Posterior vena cava (tissue), 2 donors: ENCODE measurements at regions of chr1 and their contacts with region 1.

Region 1: DNA sequence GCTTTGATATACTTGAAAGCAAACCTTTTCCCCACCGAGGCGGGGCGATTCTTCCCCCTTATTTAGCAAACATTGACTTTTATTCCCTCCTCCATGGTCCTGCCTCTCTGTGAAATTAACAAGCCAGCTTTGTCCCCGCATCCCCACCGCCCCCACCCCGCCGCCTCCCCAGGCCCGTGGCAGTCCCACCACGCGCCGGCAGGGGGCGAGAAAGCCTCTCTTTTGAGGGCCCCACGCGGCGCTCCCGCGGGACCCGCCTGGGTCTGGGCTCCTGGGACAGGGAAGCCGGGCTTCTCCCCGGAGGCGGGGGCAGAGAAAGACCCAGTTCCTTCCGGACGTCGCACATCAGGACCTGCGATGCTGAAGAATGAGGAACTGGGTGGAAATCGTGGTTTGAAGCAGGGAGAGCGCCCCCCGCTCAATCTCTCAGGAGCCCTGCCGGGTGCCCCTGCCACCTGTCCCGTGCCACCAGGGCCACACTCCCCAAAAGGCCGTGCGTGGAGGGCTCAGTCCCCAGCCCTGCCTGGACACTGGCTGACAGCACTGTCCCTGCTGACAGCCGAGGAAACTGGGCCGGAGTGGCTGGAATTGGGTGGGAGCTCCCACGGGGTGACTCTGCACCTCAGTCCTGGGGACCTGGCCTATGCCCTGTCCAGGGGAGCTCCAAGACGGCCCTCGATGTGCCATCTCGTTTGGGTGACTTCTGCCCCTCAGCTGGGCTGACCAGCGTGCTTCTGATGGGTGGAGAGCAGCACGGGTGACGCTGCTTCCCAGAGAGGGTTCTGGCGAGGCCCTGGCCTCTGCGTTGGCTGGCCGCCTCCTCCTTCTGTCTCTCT is 8.6 kb upstream of the ACTRT2 start:
- DNase-seq: peak; percentile 85

Region 2: DNA sequence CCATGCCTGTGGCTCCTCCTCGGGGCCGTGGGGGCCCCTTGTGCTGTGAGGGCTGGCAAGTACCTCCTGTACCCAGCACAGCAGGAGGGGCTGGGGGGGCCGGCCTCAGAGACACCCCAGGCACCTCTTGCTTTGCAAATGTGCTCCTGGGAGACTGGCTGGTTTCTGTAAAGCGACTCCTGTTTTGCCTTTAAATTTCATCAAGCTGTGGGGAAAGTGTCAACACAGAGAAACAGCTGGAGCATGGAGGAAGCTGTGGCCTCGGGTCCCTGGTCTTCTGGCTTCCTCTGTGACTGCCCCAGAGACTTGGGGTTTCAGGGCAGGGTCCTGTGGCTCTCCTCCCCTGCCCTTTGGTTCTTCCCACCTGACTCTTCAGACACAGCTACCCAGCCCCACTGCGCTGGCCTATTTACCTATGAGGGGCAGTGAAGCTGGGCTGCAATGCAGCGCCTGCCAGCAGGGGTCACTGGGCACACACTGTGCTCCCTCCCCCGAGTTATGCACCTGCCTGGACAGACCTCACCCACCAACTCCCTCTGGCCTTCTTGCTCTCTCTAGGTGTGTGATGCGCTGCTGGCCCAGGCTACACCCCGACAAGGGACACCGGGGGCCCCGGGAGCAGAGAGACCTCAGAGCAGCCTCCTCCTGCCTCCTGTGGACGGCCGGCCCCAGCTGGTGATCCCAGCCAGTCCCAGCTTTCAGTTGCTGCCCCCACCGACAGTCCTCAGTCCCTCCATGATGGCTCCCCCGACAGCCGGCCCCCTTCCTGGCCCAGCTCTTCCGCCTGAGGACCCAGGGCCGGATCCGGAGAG is 582.7 kb before region 1 on chr1:
- intact Hi-C with region 1: loop called in 1 of 2 experiments (anchors 5 kb)
- DNase-seq: no peak

Region 3: DNA sequence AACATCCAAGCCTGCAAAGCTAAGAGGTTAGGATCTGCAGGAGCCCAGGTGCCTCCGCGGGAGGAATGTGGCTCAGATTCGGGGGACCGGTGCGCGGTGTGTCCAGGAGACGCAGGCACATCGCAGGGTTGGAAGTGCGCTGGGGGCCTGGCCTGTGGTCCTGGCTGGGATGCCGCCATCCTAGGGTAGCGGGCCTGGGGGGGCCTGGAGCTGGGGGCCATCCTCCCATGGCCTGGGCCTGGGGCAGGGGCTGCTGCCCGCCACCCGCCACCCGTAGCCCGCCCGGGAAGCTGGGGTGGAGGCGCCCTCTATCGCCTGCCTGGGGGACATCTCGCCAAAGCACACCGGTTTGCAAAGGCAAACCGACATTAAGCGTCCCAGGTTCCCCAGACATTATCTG is 271.2 kb after region 1 on chr1:
- intact Hi-C with region 1: loop called (anchors 2 to 5 kb)
- DNase-seq: no peak

Region 4: DNA sequence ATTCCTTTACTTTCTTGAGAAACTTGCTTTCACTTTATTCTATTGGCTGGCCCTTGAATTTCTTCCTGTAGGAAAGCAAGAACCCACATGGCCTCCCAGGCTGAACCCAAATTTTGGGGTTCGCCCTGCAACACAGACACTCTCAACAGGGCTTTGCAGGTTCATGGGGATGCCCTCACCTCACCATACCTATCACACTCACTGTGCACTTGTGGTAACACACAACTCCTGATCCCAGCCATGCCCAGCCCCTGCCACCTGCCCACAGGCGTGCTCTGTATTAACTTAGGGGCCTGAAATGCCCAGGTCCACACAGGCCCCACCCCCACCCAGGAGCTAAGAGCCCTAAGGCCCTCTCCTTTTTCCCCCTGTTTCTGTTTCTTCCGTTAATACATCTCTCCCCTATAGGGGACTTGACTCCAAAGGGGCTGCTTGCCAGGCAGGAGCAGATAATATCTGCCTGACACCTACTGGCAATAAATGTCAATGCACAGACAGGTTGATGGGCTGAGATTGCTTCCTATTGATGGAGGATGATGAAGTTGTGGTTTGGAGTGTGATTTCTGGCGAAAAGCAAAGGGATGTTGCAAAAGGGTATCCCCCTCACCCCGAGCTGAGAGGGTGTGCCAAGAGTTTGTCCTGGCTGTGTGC is 1813.3 kb after region 1 on chr1:
- intact Hi-C with region 1: no loop called
- DNase-seq: no peak